CD4-positive, alpha-beta memory T cell (primary cell): ENCODE measurements at regions of chr20 and their contacts with region 1.

Region 1: GRCh38 chr20:354298-355064 is 7.6 kb downstream of the NRSN2 start:
- DNase-seq: peak; percentile 76 to 83 (median 81)
- H3K4me3 ChIP-seq: no peak overlapping the region
- H3K4me3 Mint-ChIP-seq: peak overlapping the region in 1 of 8 donors; percentile 20
- H3K27ac ChIP-seq: no peak overlapping the region
- H3K27ac Mint-ChIP-seq: no peak overlapping the region
- H3K4me1 ChIP-seq: no peaks in the 10 kb centered on the region
- H3K4me1 Mint-ChIP-seq: peaks cover 0 to 7% (median 4%) of the 10 kb centered on the region in 4 donors
- H3K27me3 ChIP-seq: no peaks in the 10 kb centered on the region
- H3K27me3 Mint-ChIP-seq: no peaks in the 10 kb centered on the region

Region 2: DNA sequence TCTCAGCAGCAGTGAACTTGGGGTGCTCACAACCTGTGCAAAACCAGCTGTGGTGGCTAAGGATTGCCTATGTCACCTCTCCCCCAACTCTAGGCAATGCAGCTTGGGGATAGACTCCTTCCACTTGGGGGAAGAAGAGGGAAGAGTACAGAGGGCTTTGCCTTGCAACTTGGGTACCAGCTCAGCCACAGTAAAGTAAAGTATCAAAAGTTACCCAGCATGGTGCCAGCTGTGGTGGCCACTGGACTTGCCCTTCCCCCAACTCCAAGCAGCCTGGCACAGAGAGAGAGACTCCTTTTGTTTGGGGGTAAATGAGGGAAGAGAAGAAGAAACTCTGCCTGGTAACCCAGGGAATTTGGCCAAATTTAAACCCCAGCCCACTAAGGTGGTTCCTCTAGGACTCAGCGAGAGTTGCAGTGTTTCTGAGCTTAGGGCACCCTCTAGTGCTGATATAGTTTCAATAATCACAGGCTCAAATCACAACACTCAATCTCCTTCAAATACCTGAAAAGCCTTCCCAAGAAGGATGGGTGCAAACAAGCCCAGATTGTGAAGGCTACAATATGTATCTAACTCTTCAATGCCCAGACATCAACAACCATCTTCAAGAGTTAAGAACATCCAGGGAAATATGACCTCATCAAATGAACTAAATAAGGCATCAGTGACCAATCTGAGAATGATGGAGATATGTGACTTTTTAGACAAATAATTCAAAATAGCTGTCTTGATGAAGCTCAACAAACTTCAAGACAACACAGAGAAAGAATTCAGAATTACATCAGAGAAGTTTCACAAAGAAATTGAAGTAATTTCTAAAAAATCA is 135.0 kb before region 1 on chr20:
- CTCF ChIA-PET with region 1: no interaction called
- POLR2A ChIA-PET with region 1: no interaction called
- intact Hi-C with region 1: no loop called
- DNase-seq: no peak
- H3K4me3 ChIP-seq: no peak overlapping the region
- H3K4me3 Mint-ChIP-seq: no peak overlapping the region
- H3K27ac ChIP-seq: no peak overlapping the region
- H3K27ac Mint-ChIP-seq: no peak overlapping the region
- H3K4me1 ChIP-seq: no peaks in the 10 kb centered on the region
- H3K4me1 Mint-ChIP-seq: no peaks in the 10 kb centered on the region
- H3K27me3 ChIP-seq: peaks cover 3% of the 10 kb centered on the region
- H3K27me3 Mint-ChIP-seq: peaks cover 23 to 35% of the 10 kb centered on the region in 2 donors

Region 3: DNA sequence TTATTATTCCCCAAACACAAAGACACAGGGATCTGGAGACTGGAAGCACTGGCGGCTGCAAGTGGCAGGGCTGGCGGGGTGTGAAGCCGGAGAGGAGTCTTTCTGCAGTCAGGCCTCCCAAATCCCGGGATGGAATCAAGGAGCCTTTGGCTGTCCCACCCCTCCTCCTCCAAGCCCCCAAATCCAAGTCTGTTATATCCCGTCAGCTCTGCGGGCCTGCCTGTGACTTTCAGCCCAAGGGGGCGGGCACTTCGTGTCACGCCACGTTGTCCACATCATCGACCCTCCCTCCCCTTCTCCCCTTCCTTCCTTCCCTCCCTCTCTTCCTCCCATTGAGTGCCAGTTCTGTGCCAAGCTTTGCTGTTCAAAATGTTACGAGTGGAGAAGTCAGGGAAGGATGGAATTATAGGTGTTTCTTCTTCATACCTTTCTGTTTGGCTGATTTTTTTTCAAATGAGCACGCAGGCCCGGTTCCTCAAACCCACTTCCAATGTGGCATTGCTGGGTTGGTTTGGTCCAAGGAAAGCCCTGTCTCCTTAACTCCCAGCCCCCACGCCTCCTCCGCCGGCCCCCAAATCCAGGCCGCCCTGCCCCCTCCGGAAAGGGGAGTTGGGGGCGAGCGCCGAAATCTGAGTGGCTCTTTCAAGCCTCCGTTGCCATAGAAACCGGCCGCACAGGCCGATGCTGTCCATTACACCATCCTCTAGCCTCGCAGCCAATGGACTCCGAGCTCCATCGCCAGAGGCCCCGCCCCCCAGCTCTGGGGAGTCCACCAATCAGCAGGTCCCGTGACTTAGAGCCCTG is 44.4 kb before region 1 on chr20:
- CTCF ChIA-PET with region 1: no interaction called
- POLR2A ChIA-PET with region 1: no interaction called
- intact Hi-C with region 1: no loop called
- DNase-seq: peak; percentile 56 to 74 (median 59)
- H3K4me3 ChIP-seq: no peak overlapping the region
- H3K4me3 Mint-ChIP-seq: peak overlapping the region; percentile 49 to 78 (median 68)
- H3K27ac ChIP-seq: no peak overlapping the region
- H3K27ac Mint-ChIP-seq: peak overlapping the region in 5 of 7 donors; percentile 36 to 80 (median 49)
- H3K4me1 ChIP-seq: peaks cover 12% of the 10 kb centered on the region
- H3K4me1 Mint-ChIP-seq: peaks cover 10 to 12% (median 10%) of the 10 kb centered on the region in 4 donors
- H3K27me3 ChIP-seq: no peaks in the 10 kb centered on the region
- H3K27me3 Mint-ChIP-seq: peaks cover 0 to 1% of the 10 kb centered on the region in 2 donors

Region 4: GRCh38 chr20:431012-431904 is 76.8 kb after region 1 on chr20:
- CTCF ChIA-PET with region 1: interaction called, 7 read pairs
- POLR2A ChIA-PET with region 1: no interaction called
- intact Hi-C with region 1: loop called (anchors 1 kb)
- DNase-seq: peak in 4 of 5 donors; percentile 10 to 20 (median 19)
- H3K4me3 ChIP-seq: no peak overlapping the region
- H3K4me3 Mint-ChIP-seq: no peak overlapping the region
- H3K27ac ChIP-seq: no peak overlapping the region
- H3K27ac Mint-ChIP-seq: peak overlapping the region in 4 of 7 donors; percentile 30 to 78 (median 44)
- H3K4me1 ChIP-seq: peaks cover 29% of the 10 kb centered on the region
- H3K4me1 Mint-ChIP-seq: peaks cover 22 to 50% (median 31%) of the 10 kb centered on the region in 4 donors
- H3K27me3 ChIP-seq: no peaks in the 10 kb centered on the region
- H3K27me3 Mint-ChIP-seq: no peaks in the 10 kb centered on the region

Region 5: DNA sequence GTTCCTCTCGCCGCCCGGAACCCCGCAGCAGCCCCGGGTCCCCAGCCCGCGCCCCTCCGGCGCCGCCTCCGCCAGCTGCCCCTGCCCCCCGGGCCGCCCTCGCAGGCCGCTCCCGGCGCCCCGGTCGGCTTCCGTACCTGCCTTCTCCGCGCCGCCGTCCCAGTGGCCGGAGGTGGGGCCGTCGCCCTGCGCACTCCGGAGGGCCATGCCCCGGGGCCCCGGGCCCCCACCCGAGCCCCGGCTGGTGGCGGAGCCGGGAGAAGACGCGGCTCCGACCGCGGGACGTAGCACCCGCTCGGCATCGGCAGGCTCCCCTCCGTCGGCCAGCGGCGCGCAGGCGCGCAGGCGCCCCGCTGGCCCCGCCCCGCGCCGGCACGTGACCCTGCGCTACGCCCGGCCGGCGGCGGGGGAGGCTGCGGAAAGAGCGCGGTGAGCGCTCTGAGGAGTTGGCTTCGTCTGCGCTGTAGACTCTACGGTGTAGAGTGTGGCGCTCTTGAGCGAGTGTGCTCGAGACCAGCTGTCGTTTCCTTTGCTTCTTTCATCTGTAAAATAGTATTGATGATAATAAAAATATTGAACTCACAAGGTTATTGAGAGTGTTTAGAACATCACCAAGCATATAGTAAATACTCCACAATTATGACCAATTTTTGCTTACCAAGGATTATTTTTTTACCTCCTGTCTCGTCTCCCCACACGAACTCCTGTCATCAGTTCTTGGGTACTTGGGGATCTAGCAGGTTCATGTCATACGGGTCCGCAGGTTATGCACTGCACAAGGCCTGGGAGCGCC is 107.9 kb after region 1 on chr20 and contains the start of gene TBC1D20:
- CTCF ChIA-PET with region 1: interaction called, 5 read pairs
- POLR2A ChIA-PET with region 1: no interaction called
- intact Hi-C with region 1: loop called (anchors 1 kb)
- DNase-seq: peak; percentile 80 to 90 (median 89)
- H3K4me3 ChIP-seq: peak within 1 kb of the TSS; percentile 70 to 76
- H3K4me3 Mint-ChIP-seq: peak within 1 kb of the TSS; percentile 97 to 99 (median 98)
- H3K27ac ChIP-seq: peak within 1 kb of the TSS; percentile 84
- H3K27ac Mint-ChIP-seq: peak within 1 kb of the TSS; percentile 91 to 98 (median 97)
- H3K4me1 ChIP-seq: peaks cover 37% of the 10 kb centered on the region
- H3K4me1 Mint-ChIP-seq: peaks cover 30 to 49% (median 41%) of the 10 kb centered on the region in 4 donors
- H3K27me3 ChIP-seq: no peaks in the 10 kb centered on the region
- H3K27me3 Mint-ChIP-seq: peaks cover 0 to 2% of the 10 kb centered on the region in 2 donors
- total RNA-seq, gene TBC1D20: 42.1 to 42.9 TPM

Region 6: GRCh38 chr20:645318-646106 is 291.0 kb after region 1 on chr20:
- CTCF ChIA-PET with region 1: interaction called, 24 read pairs
- POLR2A ChIA-PET with region 1: no interaction called
- intact Hi-C with region 1: no loop called
- DNase-seq: peak in 4 of 5 donors; percentile 49 to 63 (median 52)
- H3K4me3 ChIP-seq: no peak overlapping the region
- H3K4me3 Mint-ChIP-seq: peak overlapping the region in 3 of 8 donors; percentile 15 to 29 (median 26)
- H3K27ac ChIP-seq: no peak overlapping the region
- H3K27ac Mint-ChIP-seq: peak overlapping the region in 1 of 7 donors; percentile 16
- H3K4me1 ChIP-seq: peaks cover 11% of the 10 kb centered on the region
- H3K4me1 Mint-ChIP-seq: peaks cover 6 to 30% (median 21%) of the 10 kb centered on the region in 4 donors
- H3K27me3 ChIP-seq: peaks cover 11% of the 10 kb centered on the region
- H3K27me3 Mint-ChIP-seq: peaks cover 3 to 8% of the 10 kb centered on the region in 2 donors

Region 7: GRCh38 chr20:739736-740135 is 385.3 kb after region 1 on chr20:
- CTCF ChIA-PET with region 1: no interaction called
- POLR2A ChIA-PET with region 1: no interaction called
- intact Hi-C with region 1: loop called (anchors 2 kb)
- DNase-seq: no peak
- H3K4me3 ChIP-seq: no peak overlapping the region
- H3K4me3 Mint-ChIP-seq: no peak overlapping the region
- H3K27ac ChIP-seq: no peak overlapping the region
- H3K27ac Mint-ChIP-seq: no peak overlapping the region
- H3K4me1 ChIP-seq: no peaks in the 10 kb centered on the region
- H3K4me1 Mint-ChIP-seq: no peaks in the 10 kb centered on the region
- H3K27me3 ChIP-seq: no peaks in the 10 kb centered on the region
- H3K27me3 Mint-ChIP-seq: peaks cover 14 to 27% of the 10 kb centered on the region in 2 donors